CD4-positive, alpha-beta T cell (primary cell): ENCODE measurements at regions of chr5 and their contacts with region 1.

Region 1: GRCh38 chr5:80134879-80135278 is 99.7 kb downstream of the THBS4 start:
- DNase-seq: no peak
- ATAC-seq: no peak
- H3K4me3 ChIP-seq: no peak overlapping the region
- H3K4me3 Mint-ChIP-seq: peak overlapping the region; percentile 47
- H3K27ac ChIP-seq: peak overlapping the region; percentile 65 to 66
- H3K27ac Mint-ChIP-seq: peak overlapping the region; percentile 95
- H3K4me1 ChIP-seq: peaks cover 78% of the 10 kb centered on the region
- H3K4me1 Mint-ChIP-seq: peaks cover 95% of the 10 kb centered on the region
- H3K27me3 ChIP-seq: no peaks in the 10 kb centered on the region
- H3K27me3 Mint-ChIP-seq: no peaks in the 10 kb centered on the region
- CTCF ChIP-seq: no peak

Region 2: DNA sequence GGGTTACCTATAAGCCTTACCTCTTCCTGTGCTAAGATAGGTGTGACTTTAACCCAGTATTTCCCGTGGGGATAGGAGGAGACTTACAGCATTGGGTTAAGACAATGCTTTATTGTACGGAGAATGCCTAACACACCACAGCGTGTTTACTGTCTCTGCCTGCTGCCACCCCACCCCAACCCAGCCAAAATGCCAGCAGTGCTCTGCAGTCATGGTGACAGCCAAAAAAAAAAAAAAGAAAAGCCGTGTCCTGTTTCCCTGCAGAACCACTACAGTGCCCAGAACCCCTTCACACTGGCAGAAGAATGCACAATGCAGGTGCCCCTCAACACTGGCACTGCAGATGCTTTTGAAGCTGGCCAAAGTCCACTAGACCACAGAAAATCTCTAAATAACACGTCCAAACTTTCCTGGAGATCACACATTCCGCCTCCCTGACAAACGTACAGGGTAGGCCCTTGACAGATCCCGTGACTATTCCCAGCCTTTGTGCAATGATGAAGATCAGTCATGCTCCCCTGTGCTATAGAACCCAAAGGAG is 18.8 kb after region 1 on chr5:
- CTCF ChIA-PET with region 1: interaction called, 5 read pairs
- POLR2A ChIA-PET with region 1: interaction called, 96 read pairs
- intact Hi-C with region 1: loop called in 1 of 2 experiments (anchors 1 kb)
- DNase-seq: peak in 11 of 14 experiments; percentile 19 to 67 (median 48)
- ATAC-seq: peak; percentile 69
- H3K4me3 ChIP-seq: no peak overlapping the region
- H3K4me3 Mint-ChIP-seq: peak overlapping the region; percentile 73
- H3K27ac ChIP-seq: peak overlapping the region; percentile 48 to 56
- H3K27ac Mint-ChIP-seq: peak overlapping the region; percentile 98
- H3K4me1 ChIP-seq: peaks cover 51% of the 10 kb centered on the region
- H3K4me1 Mint-ChIP-seq: peaks cover 86% of the 10 kb centered on the region
- H3K27me3 ChIP-seq: no peaks in the 10 kb centered on the region
- H3K27me3 Mint-ChIP-seq: no peaks in the 10 kb centered on the region
- CTCF ChIP-seq: no peak

Region 3: DNA sequence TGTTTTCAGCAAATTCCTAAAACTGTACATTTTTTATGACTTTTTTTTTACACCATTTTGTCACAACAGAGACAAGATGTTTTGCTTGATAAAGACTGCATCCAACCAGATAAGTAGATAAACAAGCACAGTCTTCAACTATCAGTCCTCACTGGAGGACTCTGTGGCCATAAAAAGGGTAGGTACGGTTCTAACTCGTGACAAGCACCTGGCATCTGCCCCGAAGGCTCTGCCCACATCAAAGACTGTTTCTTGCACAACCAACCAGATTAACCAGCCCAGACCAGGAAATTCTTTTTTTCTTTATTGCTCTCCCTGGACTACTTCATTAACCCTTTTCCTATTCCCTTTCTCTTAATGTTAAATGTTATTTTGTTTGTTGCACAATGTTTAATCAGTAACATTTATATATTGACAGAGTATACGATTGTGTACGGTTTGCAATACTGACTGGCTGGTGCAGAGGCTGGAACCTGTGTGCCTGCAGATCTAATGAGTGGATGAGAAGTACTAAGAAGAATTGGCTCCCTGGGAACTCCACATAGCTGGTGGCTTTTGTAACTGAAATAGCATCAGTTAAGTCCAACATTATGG is 46.8 kb after region 1 on chr5:
- CTCF ChIA-PET with region 1: no interaction called
- POLR2A ChIA-PET with region 1: interaction called, 54 read pairs
- intact Hi-C with region 1: loop called in 1 of 2 experiments (anchors 5 kb)
- DNase-seq: peak in 12 of 14 experiments; percentile 29 to 90 (median 53)
- ATAC-seq: peak; percentile 51
- H3K4me3 ChIP-seq: no peak overlapping the region
- H3K4me3 Mint-ChIP-seq: peak overlapping the region; percentile 71
- H3K27ac ChIP-seq: peak overlapping the region; percentile 63 to 77
- H3K27ac Mint-ChIP-seq: peak overlapping the region; percentile 94
- H3K4me1 ChIP-seq: peaks cover 82% of the 10 kb centered on the region
- H3K4me1 Mint-ChIP-seq: peaks cover 89% of the 10 kb centered on the region
- H3K27me3 ChIP-seq: no peaks in the 10 kb centered on the region
- H3K27me3 Mint-ChIP-seq: no peaks in the 10 kb centered on the region
- CTCF ChIP-seq: no peak

Region 4: DNA sequence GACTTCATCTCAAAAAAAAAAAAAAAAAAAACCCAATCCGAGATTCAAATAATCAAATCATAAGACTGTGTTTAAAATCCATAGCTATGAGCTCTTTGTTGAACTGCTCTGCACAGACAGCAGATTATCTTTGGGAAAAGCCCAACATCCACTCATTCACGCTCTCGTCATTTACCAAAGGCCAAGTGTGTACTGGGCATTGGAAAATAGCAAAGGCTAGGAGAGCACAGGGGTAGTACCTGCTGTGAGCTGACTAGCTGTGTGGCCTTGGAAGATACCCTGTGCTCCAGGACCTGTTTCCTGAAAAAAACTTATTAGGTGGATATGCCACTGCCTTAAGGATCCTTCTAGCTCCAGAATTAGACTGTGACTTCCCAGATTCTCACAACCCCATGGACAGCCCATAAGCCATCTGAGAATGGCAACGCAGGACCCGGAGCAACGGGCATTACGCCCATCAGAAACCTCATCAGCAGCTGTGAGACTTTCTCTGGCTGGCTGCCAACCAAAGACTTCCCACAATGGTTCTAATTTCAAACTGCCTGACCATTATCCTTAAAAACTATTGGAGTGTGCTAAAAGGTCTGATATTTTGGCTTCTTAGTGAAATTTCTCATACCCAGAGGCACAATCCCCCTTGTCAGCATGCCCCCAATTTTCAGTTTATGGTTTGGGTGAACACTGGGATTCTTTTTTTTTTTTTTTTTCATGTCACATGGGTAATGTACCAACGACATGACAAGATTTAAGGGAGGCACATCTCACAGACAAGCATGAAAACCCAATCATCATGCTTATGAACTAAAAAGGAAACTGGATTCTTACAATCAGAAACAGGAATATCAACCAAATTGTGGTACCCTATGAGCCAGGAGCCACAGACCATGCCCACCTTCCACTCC is 104.2 kb after region 1 on chr5:
- CTCF ChIA-PET with region 1: no interaction called
- POLR2A ChIA-PET with region 1: interaction called, 15 read pairs
- intact Hi-C with region 1: no loop called
- DNase-seq: peak in 3 of 14 experiments; percentile 49 to 58 (median 53)
- ATAC-seq: peak; percentile 27
- H3K4me3 ChIP-seq: peak overlapping the region; percentile 4
- H3K4me3 Mint-ChIP-seq: peak overlapping the region; percentile 80
- H3K27ac ChIP-seq: peak overlapping the region; percentile 6 to 32
- H3K27ac Mint-ChIP-seq: peak overlapping the region; percentile 70
- H3K4me1 ChIP-seq: peaks cover 55% of the 10 kb centered on the region
- H3K4me1 Mint-ChIP-seq: peaks cover 80% of the 10 kb centered on the region
- H3K27me3 ChIP-seq: no peaks in the 10 kb centered on the region
- H3K27me3 Mint-ChIP-seq: no peaks in the 10 kb centered on the region
- CTCF ChIP-seq: no peak

Region 5: DNA sequence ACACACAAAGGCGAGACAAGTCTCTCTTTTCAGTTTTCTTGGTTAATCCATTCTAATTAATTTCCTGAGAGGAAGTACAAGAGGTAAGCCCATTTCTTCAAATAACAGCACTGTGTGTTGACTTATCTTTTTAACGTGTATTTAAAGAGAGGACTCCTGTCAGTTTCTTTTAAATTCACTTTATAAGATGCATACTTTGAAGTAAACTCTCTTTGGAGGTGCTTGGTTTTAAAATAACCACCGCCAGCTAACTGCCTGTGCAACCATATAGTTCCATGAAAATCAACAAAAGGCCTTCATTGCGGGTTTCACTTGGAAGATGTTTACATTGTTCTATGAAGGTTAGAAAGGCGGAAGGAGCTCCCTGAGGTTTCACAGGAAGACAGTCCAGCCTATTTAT is 134.0 kb after region 1 on chr5:
- CTCF ChIA-PET with region 1: no interaction called
- POLR2A ChIA-PET with region 1: interaction called, 14 read pairs
- intact Hi-C with region 1: loop called in 1 of 2 experiments (anchors 5 kb)
- DNase-seq: no peak
- ATAC-seq: peak; percentile 35
- H3K4me3 ChIP-seq: no peak overlapping the region
- H3K4me3 Mint-ChIP-seq: peak overlapping the region; percentile 81
- H3K27ac ChIP-seq: peak overlapping the region in 1 of 2 donors; percentile 5
- H3K27ac Mint-ChIP-seq: peak overlapping the region; percentile 99
- H3K4me1 ChIP-seq: peaks cover 40% of the 10 kb centered on the region
- H3K4me1 Mint-ChIP-seq: peaks cover 56% of the 10 kb centered on the region
- H3K27me3 ChIP-seq: no peaks in the 10 kb centered on the region
- H3K27me3 Mint-ChIP-seq: no peaks in the 10 kb centered on the region
- CTCF ChIP-seq: no peak